ENCODE measurements at regions of chr3 and their contacts with region 1.

Region 1: GRCh38 chr3:183468424-183468823 is 40.0 kb upstream of the MCF2L2 start:
- DNase-seq: no peak
- ATAC-seq: no peak
- H3K4me3 ChIP-seq: no peak overlapping the region
- H3K4me3 Mint-ChIP-seq: no peak overlapping the region
- H3K27ac ChIP-seq: no peak overlapping the region
- H3K27ac Mint-ChIP-seq: peak overlapping the region in 1 of 9 donors; percentile 27
- H3K4me1 ChIP-seq: peaks cover 0 to 5% of the 10 kb centered on the region in 2 donors
- H3K4me1 Mint-ChIP-seq: peaks cover 2 to 18% (median 5%) of the 10 kb centered on the region in 7 donors
- H3K27me3 ChIP-seq: no peaks in the 10 kb centered on the region
- H3K27me3 Mint-ChIP-seq: peaks cover 0 to 4% (median 0%) of the 10 kb centered on the region in 5 donors

Region 2: GRCh38 chr3:183178629-183179549 is 289.5 kb before region 1 on chr3:
- CTCF ChIA-PET with region 1: no interaction called
- POLR2A ChIA-PET with region 1: no interaction called
- intact Hi-C with region 1: loop called in 1 of 2 experiments (anchors 1 kb)
- DNase-seq: peak in 7 of 9 donors; percentile 22 to 61 (median 31)
- ATAC-seq: peak; percentile 67
- H3K4me3 ChIP-seq: peak overlapping the region; percentile 46
- H3K4me3 Mint-ChIP-seq: peak overlapping the region; percentile 63 to 85 (median 78)
- H3K27ac ChIP-seq: no peak overlapping the region
- H3K27ac Mint-ChIP-seq: no peak overlapping the region
- H3K4me1 ChIP-seq: no peaks in the 10 kb centered on the region
- H3K4me1 Mint-ChIP-seq: peaks cover 5 to 15% (median 8%) of the 10 kb centered on the region in 7 donors
- H3K27me3 ChIP-seq: peaks cover 0 to 3% of the 10 kb centered on the region in 2 donors
- H3K27me3 Mint-ChIP-seq: peaks cover 28 to 55% (median 46%) of the 10 kb centered on the region in 5 donors

Region 3: DNA sequence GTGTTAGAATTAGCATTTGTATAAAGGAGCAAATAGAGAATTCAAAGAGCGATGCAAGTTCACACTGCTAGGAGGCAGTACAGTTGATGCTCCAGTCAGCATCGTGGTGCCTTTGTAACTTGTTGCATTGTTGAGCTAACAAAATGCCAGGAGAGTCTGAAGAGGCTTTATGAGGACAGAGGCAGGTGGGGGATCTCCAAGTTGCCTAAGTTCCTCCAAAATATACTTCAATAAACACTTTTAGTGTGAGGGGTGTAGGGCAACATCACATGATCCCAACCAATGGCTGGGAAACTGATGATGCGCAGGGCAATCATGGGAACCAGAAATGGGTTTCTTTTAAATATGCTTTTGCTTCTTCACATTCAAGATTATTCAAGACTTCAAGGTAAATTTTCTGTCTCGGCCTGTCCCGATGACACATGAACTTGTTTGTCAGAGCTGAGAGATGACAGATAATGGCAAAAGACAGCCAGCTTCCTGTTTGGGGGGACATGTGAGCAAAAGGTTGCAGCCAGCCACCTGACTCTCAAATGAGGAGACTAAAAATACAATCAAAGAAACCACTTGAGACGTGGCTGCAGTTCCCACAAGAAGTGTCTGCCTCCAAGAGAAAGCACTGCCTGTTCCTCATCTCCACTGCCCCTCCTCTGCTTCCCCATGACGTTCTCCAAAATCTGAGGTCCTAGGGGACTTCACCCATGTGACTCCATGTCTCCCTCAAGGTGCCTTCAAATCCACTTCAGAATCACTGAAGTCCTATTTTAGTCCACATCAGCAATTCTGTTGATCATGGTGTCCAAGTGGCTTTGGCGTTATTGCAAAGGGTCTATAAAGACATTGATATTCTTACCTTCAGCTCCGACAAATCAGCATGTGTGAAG is 47.8 kb after region 1 on chr3:
- CTCF ChIA-PET with region 1: no interaction called
- POLR2A ChIA-PET with region 1: no interaction called
- intact Hi-C with region 1: loop called in 1 of 2 experiments (anchors 1 kb)
- DNase-seq: peak in 8 of 9 donors; percentile 34 to 90 (median 77)
- ATAC-seq: peak; percentile 80
- H3K4me3 ChIP-seq: peak overlapping the region; percentile 8
- H3K4me3 Mint-ChIP-seq: peak overlapping the region; percentile 39 to 84 (median 68)
- H3K27ac ChIP-seq: peak overlapping the region; percentile 57
- H3K27ac Mint-ChIP-seq: peak overlapping the region; percentile 77 to 94 (median 89)
- H3K4me1 ChIP-seq: peaks cover 32 to 54% of the 10 kb centered on the region in 2 donors
- H3K4me1 Mint-ChIP-seq: peaks cover 60 to 95% (median 90%) of the 10 kb centered on the region in 7 donors
- H3K27me3 ChIP-seq: no peaks in the 10 kb centered on the region
- H3K27me3 Mint-ChIP-seq: no peaks in the 10 kb centered on the region

Region 4: GRCh38 chr3:183697610-183698317 is 229.3 kb after region 1 on chr3 and contains the start of gene YEATS2:
- CTCF ChIA-PET with region 1: no interaction called
- POLR2A ChIA-PET with region 1: no interaction called
- intact Hi-C with region 1: loop called in 1 of 2 experiments (anchors 1 kb)
- DNase-seq: peak; percentile 60 to 81 (median 74)
- ATAC-seq: peak; percentile 95
- H3K4me3 ChIP-seq: peak within 1 kb of the TSS; percentile 89
- H3K4me3 Mint-ChIP-seq: peak within 1 kb of the TSS; percentile 84 to 99 (median 94)
- H3K27ac ChIP-seq: peak within 1 kb of the TSS; percentile 84
- H3K27ac Mint-ChIP-seq: peak within 1 kb of the TSS; percentile 74 to 97 (median 90)
- H3K4me1 ChIP-seq: peaks cover 9 to 18% of the 10 kb centered on the region in 2 donors
- H3K4me1 Mint-ChIP-seq: peaks cover 32 to 50% (median 40%) of the 10 kb centered on the region in 7 donors
- H3K27me3 ChIP-seq: no peaks in the 10 kb centered on the region
- H3K27me3 Mint-ChIP-seq: no peaks in the 10 kb centered on the region
- total RNA-seq, gene YEATS2: 20.6 to 61.4 (median 21.9) TPM

Region 5: DNA sequence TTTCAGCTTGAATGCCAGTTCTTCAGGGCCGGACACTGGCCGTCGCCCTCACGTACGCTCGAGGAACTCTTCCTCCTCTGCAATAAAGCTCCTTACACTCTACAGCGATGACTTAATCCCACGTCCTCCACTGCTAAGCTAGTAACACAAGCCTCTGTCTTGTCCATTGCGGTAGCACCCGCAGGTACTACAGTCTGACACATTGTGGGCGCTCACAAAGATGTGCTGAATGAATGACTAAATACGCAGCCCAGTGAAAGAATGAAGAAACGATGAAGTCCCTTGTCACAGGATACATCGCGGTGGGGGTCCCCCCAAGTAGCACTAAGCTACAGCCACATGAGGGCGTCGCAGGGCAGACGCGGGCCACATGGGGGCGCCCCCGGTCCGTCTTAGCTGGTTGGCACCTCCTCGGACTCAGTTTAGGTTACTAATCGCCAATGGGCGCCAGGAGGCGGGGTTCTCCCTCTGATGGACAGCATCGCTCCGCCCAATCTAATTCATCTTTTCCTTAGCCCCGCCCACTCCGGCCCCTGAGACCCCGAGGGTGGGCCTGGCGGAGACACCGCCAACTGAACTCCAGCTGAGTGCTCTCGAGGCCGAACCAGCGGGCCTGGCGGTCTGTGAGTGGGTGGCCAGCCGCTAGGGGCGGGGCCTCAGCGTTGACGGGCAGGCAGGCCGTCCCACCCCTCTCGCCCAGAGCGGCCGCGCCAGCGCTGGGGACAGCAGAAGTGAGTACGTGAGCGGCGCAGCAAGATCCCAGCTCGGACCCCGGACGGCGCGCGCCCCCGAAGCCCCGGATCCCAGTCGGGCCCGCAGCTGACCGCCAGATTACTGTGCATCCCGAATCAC is 1092.9 kb after region 1 on chr3 and contains the start of gene EPHB3:
- CTCF ChIA-PET with region 1: no interaction called
- POLR2A ChIA-PET with region 1: no interaction called
- intact Hi-C with region 1: no loop called
- DNase-seq: peak; percentile 81 to 90 (median 89)
- ATAC-seq: peak; percentile 92
- H3K4me3 ChIP-seq: peak within 1 kb of the TSS; percentile 55
- H3K4me3 Mint-ChIP-seq: peak within 1 kb of the TSS; percentile 66 to 87 (median 81)
- H3K27ac ChIP-seq: no peak within 1 kb of the TSS
- H3K27ac Mint-ChIP-seq: peak within 1 kb of the TSS in 8 of 9 donors; percentile 59 to 84 (median 68)
- H3K4me1 ChIP-seq: peaks cover 14 to 44% of the 10 kb centered on the region in 2 donors
- H3K4me1 Mint-ChIP-seq: peaks cover 18 to 56% (median 41%) of the 10 kb centered on the region in 7 donors
- H3K27me3 ChIP-seq: peaks cover 0 to 9% of the 10 kb centered on the region in 2 donors
- H3K27me3 Mint-ChIP-seq: peaks cover 16 to 73% (median 35%) of the 10 kb centered on the region in 5 donors
- total RNA-seq, gene EPHB3: 0.07 to 0.49 (median 0.32) TPM